Mammary epithelial cell (primary cell): ENCODE measurements at regions of chr1 and their contacts with region 1.

Region 1: GRCh38 chr1:182781841-182782586 is 7.6 kb upstream of the NPL start:
- DNase-seq: peak; percentile 49
- H3K4me3 ChIP-seq: no peak overlapping the region
- H3K27ac ChIP-seq: no peak overlapping the region
- H3K4me1 ChIP-seq: no peaks in the 10 kb centered on the region
- H3K27me3 ChIP-seq: no peaks in the 10 kb centered on the region
- CTCF ChIP-seq: peak; percentile 66 to 87

Region 2: GRCh38 chr1:182595641-182596240 is 186.3 kb before region 1 on chr1:
- CTCF ChIA-PET with region 1: interaction called, 18 read pairs
- dilution Hi-C with region 1: loop called (anchors 5 kb)
- in situ Hi-C with region 1: loop called (anchors 5 kb)
- intact Hi-C with region 1: no loop called
- DNase-seq: peak; percentile 33
- H3K4me3 ChIP-seq: no peak overlapping the region
- H3K27ac ChIP-seq: no peak overlapping the region
- H3K4me1 ChIP-seq: no peaks in the 10 kb centered on the region
- H3K27me3 ChIP-seq: no peaks in the 10 kb centered on the region
- CTCF ChIP-seq: peak; percentile 90 to 98

Region 3: GRCh38 chr1:182604169-182605164 is 177.5 kb before region 1 on chr1 and contains the start of gene RGS16:
- CTCF ChIA-PET with region 1: interaction called, 18 read pairs
- dilution Hi-C with region 1: loop called (anchors 5 kb)
- in situ Hi-C with region 1: loop called (anchors 5 kb)
- intact Hi-C with region 1: loop called (anchors 1 kb)
- DNase-seq: peak; percentile 84
- H3K4me3 ChIP-seq: peak within 1 kb of the TSS; percentile 49 to 72 (median 67)
- H3K27ac ChIP-seq: no peak within 1 kb of the TSS
- H3K4me1 ChIP-seq: peaks cover 11% of the 10 kb centered on the region
- H3K27me3 ChIP-seq: no peaks in the 10 kb centered on the region
- CTCF ChIP-seq: no peak
- total RNA-seq, gene RGS16: 0.33 to 0.52 TPM

Region 4: DNA sequence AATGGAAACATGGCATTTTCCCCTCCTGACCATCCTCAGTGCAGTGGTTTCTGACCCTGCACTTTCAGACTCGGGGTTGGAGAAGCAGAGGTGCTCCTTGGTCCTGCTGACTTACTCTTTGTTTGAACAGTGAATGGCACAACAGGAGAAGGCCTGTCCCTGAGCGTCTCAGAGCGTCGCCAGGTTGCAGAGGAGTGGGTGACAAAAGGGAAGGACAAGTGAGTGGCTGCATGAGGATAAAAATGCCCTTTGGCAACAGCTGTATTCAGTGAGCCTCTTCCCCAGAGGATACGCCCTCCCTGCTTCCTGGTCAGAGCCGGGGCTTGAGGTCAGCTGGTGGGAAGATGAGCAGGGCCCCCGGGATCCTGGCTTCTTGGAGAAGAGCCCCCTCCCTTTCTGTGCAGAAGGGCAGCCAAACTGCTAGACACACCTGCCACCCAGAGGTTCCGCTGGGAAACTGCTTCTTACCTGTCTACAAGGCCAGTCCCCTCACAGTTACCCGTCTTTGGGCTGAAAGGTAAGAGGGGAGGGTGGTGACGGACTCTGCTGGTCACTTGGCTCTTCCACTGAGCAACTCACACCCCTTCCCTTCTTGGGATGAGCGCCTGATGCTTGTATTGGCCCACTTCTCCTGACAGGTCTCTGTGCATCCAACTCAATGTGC is 24.1 kb after region 1 on chr1:
- CTCF ChIA-PET with region 1: no interaction called
- dilution Hi-C with region 1: no loop called
- in situ Hi-C with region 1: no loop called
- intact Hi-C with region 1: no loop called
- DNase-seq: no peak
- H3K4me3 ChIP-seq: no peak overlapping the region
- H3K27ac ChIP-seq: no peak overlapping the region
- H3K4me1 ChIP-seq: peaks cover 14% of the 10 kb centered on the region
- H3K27me3 ChIP-seq: no peaks in the 10 kb centered on the region
- CTCF ChIP-seq: peak in 1 of 2 donors; percentile 16